CD4-positive, alpha-beta T cell (primary cell): ENCODE measurements at regions of chr1 and their contacts with region 1.

Region 1: DNA sequence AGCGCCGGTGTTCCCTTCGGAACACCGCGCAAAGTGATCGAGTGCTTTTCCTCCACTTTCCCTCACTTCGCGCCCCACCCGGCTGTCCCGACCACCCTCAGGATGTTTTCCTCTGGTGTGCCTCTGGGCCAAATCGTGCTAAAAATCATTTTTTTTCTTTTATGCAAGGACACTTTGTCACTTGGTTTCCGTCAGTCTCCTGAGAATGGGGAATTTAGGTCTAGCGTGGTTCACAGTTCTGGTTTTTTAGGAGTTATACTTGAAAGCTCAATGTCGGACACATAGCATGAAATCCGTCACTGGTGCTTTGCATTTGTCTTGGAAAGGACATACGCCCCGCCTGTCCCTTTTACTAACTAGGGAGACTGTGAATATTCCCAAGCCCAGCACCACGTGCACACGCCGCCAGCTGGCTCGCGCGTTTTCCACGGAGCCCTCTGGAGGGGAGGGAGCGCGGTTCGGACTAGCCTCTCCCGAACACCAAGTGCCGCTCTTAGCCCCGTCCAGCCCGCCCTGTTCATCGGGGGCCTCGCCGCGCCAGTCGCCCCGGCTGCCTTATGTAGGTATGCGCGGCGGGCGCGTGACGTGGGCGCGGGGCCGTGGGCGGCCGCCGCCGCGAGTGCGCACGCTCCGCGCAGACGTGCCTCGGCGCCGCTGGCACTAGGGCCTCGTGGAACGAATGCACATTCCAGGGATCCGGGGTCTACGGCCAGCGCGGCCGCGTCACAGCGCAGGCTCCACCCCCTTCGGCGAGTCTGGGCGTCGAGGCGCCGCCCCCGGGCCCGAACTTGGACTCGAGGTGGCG is 572 bp upstream of the IRF2BP2 start:
- DNase-seq: peak; percentile 75 to 97 (median 86)
- ATAC-seq: peak; percentile 40
- H3K4me3 ChIP-seq: peak overlapping the region; percentile 68
- H3K4me3 Mint-ChIP-seq: peak overlapping the region; percentile 99
- H3K27ac ChIP-seq: peak overlapping the region; percentile 93 to 99
- H3K27ac Mint-ChIP-seq: peak overlapping the region; percentile 99
- H3K4me1 ChIP-seq: peaks cover 48% of the 10 kb centered on the region
- H3K4me1 Mint-ChIP-seq: peaks cover 61% of the 10 kb centered on the region
- H3K27me3 ChIP-seq: no peaks in the 10 kb centered on the region
- H3K27me3 Mint-ChIP-seq: peaks cover 10% of the 10 kb centered on the region
- CTCF ChIP-seq: no peak

Region 2: GRCh38 chr1:234089394-234089793 is 521.2 kb before region 1 on chr1:
- CTCF ChIA-PET with region 1: no interaction called
- POLR2A ChIA-PET with region 1: no interaction called
- intact Hi-C with region 1: no loop called
- DNase-seq: no peak
- ATAC-seq: no peak
- H3K4me3 ChIP-seq: no peak overlapping the region
- H3K4me3 Mint-ChIP-seq: no peak overlapping the region
- H3K27ac ChIP-seq: no peak overlapping the region
- H3K27ac Mint-ChIP-seq: no peak overlapping the region
- H3K4me1 ChIP-seq: no peaks in the 10 kb centered on the region
- H3K4me1 Mint-ChIP-seq: no peaks in the 10 kb centered on the region
- H3K27me3 ChIP-seq: peaks cover 3 to 14% of the 10 kb centered on the region in 2 experiments
- H3K27me3 Mint-ChIP-seq: peaks cover 50% of the 10 kb centered on the region
- CTCF ChIP-seq: no peak

Region 3: GRCh38 chr1:234256359-234256758 is 354.2 kb before region 1 on chr1:
- CTCF ChIA-PET with region 1: no interaction called
- POLR2A ChIA-PET with region 1: no interaction called
- intact Hi-C with region 1: no loop called
- DNase-seq: no peak
- ATAC-seq: no peak
- H3K4me3 ChIP-seq: no peak overlapping the region
- H3K4me3 Mint-ChIP-seq: no peak overlapping the region
- H3K27ac ChIP-seq: no peak overlapping the region
- H3K27ac Mint-ChIP-seq: no peak overlapping the region
- H3K4me1 ChIP-seq: peaks cover 5% of the 10 kb centered on the region
- H3K4me1 Mint-ChIP-seq: peaks cover 9% of the 10 kb centered on the region
- H3K27me3 ChIP-seq: no peaks in the 10 kb centered on the region
- H3K27me3 Mint-ChIP-seq: no peaks in the 10 kb centered on the region
- CTCF ChIP-seq: no peak

Region 4: GRCh38 chr1:234486498-234487448 is 123.8 kb before region 1 on chr1:
- CTCF ChIA-PET with region 1: no interaction called
- POLR2A ChIA-PET with region 1: interaction called, 12 read pairs
- intact Hi-C with region 1: no loop called
- DNase-seq: peak in 6 of 14 experiments; percentile 6 to 64 (median 33)
- ATAC-seq: peak; percentile 81
- H3K4me3 ChIP-seq: no peak overlapping the region
- H3K4me3 Mint-ChIP-seq: peak overlapping the region; percentile 17
- H3K27ac ChIP-seq: no peak overlapping the region
- H3K27ac Mint-ChIP-seq: peak overlapping the region; percentile 31
- H3K4me1 ChIP-seq: peaks cover 11% of the 10 kb centered on the region
- H3K4me1 Mint-ChIP-seq: peaks cover 41% of the 10 kb centered on the region
- H3K27me3 ChIP-seq: no peaks in the 10 kb centered on the region
- H3K27me3 Mint-ChIP-seq: no peaks in the 10 kb centered on the region
- CTCF ChIP-seq: peak; percentile 50

Region 5: DNA sequence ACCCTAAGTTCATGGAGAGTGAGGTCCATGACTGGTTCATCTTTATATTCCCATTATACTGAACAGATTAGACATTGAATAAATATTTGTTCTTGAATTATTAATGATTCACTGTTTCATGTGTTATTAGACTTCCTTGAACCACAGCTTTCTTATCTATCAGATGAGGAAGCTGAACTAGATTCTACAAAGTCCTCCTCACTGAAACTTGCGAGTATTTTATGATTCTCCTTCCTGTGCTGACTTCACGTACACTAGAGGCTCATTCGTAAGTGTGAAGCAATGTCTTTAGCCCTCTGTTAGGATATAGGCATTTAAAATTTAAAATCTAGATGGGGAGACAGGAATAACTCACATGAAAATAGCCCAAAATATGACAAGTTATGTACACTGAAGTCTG is 95.1 kb after region 1 on chr1:
- CTCF ChIA-PET with region 1: no interaction called
- POLR2A ChIA-PET with region 1: interaction called, 23 read pairs
- intact Hi-C with region 1: no loop called
- DNase-seq: no peak
- ATAC-seq: no peak
- H3K4me3 ChIP-seq: no peak overlapping the region
- H3K4me3 Mint-ChIP-seq: no peak overlapping the region
- H3K27ac ChIP-seq: no peak overlapping the region
- H3K27ac Mint-ChIP-seq: no peak overlapping the region
- H3K4me1 ChIP-seq: no peaks in the 10 kb centered on the region
- H3K4me1 Mint-ChIP-seq: peaks cover 22% of the 10 kb centered on the region
- H3K27me3 ChIP-seq: no peaks in the 10 kb centered on the region
- H3K27me3 Mint-ChIP-seq: no peaks in the 10 kb centered on the region
- CTCF ChIP-seq: no peak

Region 6: DNA sequence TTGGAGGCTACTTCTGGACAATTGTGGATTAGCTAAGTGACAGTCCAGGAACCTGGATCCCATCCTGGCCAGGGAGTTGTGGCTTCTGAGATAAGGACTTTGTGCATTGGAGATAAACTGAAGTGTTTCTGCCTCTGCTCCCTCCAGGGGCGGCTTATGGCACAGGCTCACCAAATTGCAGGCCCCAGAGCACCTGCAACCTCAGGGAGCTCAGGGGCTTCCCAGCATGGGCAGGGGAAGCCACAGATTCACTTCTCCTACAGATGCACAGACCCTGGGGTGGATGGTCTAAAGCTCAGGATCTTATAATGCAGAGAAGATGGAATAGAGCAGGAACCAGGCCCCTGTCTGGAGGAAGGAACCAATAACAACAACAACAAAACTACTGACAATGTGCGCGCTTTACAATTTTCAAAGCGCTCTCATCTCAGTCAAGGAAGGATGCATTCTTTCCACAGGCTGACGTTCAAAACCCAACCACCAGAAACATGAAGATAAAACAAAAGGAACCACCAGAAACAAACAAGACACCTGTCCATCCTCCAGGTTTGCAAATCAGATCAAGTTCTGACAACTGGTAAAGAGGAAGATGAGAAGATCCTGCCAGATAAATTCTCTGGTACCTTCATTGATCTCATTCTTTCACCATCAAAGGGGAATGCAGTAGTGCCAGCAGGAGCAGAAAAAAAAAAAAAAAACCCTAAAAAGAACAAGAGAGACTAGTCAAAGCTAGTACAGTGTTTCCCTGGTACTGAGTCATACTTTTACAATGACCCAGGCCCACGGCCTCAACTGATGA is 120.4 kb after region 1 on chr1:
- CTCF ChIA-PET with region 1: interaction called, 10 read pairs
- POLR2A ChIA-PET with region 1: interaction called, 238 read pairs
- intact Hi-C with region 1: no loop called
- DNase-seq: peak in 11 of 14 experiments; percentile 13 to 84 (median 45)
- ATAC-seq: peak; percentile 77
- H3K4me3 ChIP-seq: no peak overlapping the region
- H3K4me3 Mint-ChIP-seq: peak overlapping the region; percentile 9
- H3K27ac ChIP-seq: peak overlapping the region; percentile 44 to 67
- H3K27ac Mint-ChIP-seq: peak overlapping the region; percentile 83
- H3K4me1 ChIP-seq: peaks cover 71% of the 10 kb centered on the region
- H3K4me1 Mint-ChIP-seq: peaks cover 67% of the 10 kb centered on the region
- H3K27me3 ChIP-seq: no peaks in the 10 kb centered on the region
- H3K27me3 Mint-ChIP-seq: no peaks in the 10 kb centered on the region
- CTCF ChIP-seq: no peak

Region 7: GRCh38 chr1:234842726-234843641 is 232.4 kb after region 1 on chr1:
- CTCF ChIA-PET with region 1: interaction called, 9 read pairs
- POLR2A ChIA-PET with region 1: interaction called, 35 read pairs
- intact Hi-C with region 1: loop called in 1 of 2 experiments (anchors 2 kb)
- DNase-seq: peak; percentile 20 to 82 (median 42)
- ATAC-seq: peak; percentile 31
- H3K4me3 ChIP-seq: peak overlapping the region; percentile 10
- H3K4me3 Mint-ChIP-seq: peak overlapping the region; percentile 9
- H3K27ac ChIP-seq: no peak overlapping the region
- H3K27ac Mint-ChIP-seq: peak overlapping the region; percentile 81
- H3K4me1 ChIP-seq: peaks cover 41% of the 10 kb centered on the region
- H3K4me1 Mint-ChIP-seq: peaks cover 78% of the 10 kb centered on the region
- H3K27me3 ChIP-seq: no peaks in the 10 kb centered on the region
- H3K27me3 Mint-ChIP-seq: no peaks in the 10 kb centered on the region
- CTCF ChIP-seq: no peak

Region 8: DNA sequence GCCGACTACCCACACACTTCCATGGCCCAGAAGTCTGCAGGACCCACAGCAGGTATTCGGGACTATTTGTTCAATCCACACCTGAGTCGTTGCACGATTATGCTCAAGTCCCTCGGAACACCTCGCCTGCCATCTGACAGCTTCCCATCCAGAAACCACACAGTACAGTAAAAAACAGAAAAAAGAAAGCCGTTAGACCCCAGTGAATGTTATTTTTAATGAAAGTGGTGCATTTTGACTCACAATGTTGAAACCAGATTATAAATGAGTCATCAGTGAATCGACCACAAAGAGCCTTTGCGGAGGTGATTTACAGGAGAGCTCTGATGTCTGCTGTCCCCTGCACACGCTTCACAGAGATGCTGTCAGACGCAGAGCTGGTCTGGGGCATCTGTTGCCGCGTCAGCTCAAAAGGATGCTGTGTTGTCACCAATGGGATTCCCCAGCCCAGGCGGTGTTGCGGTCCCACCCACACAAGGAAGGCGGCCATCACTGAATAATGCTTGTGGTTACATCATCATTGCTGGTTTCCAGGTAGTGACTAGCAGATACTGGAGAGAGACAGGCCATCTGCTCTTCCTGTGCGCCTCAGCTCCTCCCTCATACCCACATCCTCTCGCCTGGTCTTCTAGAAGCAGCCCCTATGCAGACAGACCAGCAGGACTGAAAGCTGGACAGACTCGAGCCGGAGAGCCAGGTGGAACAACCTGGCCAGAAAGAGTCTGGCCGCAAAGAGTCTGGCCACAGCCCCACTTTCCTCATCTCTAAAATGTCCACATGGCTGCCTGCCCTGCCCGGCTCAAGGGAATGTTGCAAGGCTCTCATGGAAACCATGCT is 401.3 kb after region 1 on chr1:
- CTCF ChIA-PET with region 1: interaction called, 3 read pairs
- POLR2A ChIA-PET with region 1: interaction called, 49 read pairs
- intact Hi-C with region 1: loop called in 1 of 2 experiments (anchors 2 kb)
- DNase-seq: peak; percentile 81 to 100 (median 90)
- ATAC-seq: peak; percentile 91
- H3K4me3 ChIP-seq: peak overlapping the region; percentile 38
- H3K4me3 Mint-ChIP-seq: peak overlapping the region; percentile 58
- H3K27ac ChIP-seq: peak overlapping the region; percentile 88 to 89
- H3K27ac Mint-ChIP-seq: peak overlapping the region; percentile 86
- H3K4me1 ChIP-seq: peaks cover 52% of the 10 kb centered on the region
- H3K4me1 Mint-ChIP-seq: peaks cover 69% of the 10 kb centered on the region
- H3K27me3 ChIP-seq: no peaks in the 10 kb centered on the region
- H3K27me3 Mint-ChIP-seq: no peaks in the 10 kb centered on the region
- CTCF ChIP-seq: no peak